Endothelial cell of umbilical vein (primary cell): ENCODE measurements at regions of chr17 and their contacts with region 1.

Region 1: DNA sequence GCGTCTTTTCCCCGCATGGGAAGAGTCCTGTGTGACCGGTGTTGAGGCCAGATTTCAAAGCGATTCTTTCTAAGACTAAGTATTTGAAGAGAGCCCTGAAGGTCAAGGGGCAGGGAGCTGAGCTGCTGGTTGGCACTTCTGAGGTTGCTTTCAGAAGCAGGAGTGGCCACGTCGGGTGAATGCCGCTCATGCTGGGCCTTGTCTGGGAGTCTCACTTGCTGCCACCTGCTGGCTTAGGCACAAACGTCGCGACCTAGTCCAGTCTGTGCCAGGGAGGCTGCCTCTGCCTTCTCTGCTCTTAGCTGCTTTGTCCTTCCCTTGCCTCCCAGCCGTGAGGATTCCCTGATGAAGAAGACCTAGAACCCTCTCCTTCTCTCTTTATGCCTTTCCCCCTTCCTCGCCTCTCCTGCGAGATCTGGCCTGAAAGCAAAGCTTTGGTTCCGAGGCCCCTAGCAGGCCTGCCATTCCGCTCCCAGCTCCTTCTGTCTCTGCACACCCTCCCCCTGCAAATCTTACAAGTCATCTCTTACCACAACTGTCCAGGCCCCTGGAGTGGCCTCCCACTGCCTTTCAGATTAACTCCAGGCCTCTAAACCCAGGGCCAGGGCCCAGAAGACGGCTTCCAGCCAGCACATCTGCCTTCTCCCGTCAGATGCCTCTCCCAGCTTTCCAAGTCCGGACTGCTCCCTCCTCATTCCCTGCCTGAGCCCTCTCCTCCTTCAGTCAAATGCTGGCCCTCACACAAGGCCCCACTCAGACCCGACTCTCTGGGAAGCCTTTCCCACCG is 11.4 kb downstream of the CTNS start:
- DNase-seq: peak; percentile 47
- H3K4me3 ChIP-seq: no peak overlapping the region
- H3K27ac ChIP-seq: no peak overlapping the region
- H3K4me1 ChIP-seq: no peaks in the 10 kb centered on the region
- H3K27me3 ChIP-seq: no peaks in the 10 kb centered on the region
- CTCF ChIP-seq: peak; percentile 45 to 70
- POLR2A ChIP-seq: no peak

Region 2: GRCh38 chr17:2828397-2829038 is 819.4 kb before region 1 on chr17:
- CTCF ChIA-PET with region 1: interaction called, 5 read pairs
- POLR2A ChIA-PET with region 1: no interaction called
- dilution Hi-C with region 1: no loop called
- intact Hi-C with region 1: loop called (anchors 5 kb)
- DNase-seq: peak; percentile 44
- H3K4me3 ChIP-seq: no peak overlapping the region
- H3K27ac ChIP-seq: no peak overlapping the region
- H3K4me1 ChIP-seq: no peaks in the 10 kb centered on the region
- H3K27me3 ChIP-seq: no peaks in the 10 kb centered on the region
- CTCF ChIP-seq: peak; percentile 73 to 93
- POLR2A ChIP-seq: no peak

Region 3: DNA sequence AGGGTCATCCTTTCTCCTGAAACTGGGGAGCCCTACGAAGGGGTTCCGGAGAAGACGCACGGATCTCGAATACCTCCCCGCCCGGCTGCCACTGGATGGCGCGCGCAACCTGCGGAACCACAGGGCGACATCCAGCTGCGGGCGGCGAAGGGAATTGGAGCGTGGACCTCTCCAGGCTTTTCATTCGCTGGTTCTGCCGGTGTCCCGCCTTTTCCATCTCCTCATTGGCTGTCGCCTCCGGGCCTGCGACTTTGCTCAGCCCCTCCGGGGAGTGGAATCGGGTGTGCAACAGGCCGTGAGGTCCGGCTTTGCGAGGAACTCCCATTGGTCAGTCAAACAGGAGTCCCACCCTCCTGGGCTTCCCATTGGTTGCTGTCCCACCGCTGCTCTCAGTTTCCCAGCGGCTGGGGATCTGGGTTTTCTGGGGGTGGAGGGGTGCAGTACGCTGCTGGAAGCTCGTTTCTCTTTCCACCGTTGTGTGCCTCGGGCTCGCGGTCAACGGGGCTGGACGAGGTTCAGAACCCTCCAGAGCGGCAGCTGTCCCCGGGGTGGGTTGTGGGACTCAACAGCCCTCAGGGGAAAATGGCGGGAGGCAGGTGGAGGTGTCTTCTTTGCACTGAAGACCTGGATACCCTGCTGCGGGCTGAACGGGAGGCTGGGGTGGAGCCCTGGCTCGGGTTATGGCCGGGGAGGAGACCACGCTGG is 599.0 kb before region 1 on chr17:
- CTCF ChIA-PET with region 1: interaction called, 76 read pairs
- POLR2A ChIA-PET with region 1: no interaction called
- dilution Hi-C with region 1: no loop called
- intact Hi-C with region 1: no loop called
- DNase-seq: peak; percentile 99
- H3K4me3 ChIP-seq: peak overlapping the region; percentile 44 to 75 (median 72)
- H3K27ac ChIP-seq: no peak overlapping the region
- H3K4me1 ChIP-seq: no peaks in the 10 kb centered on the region
- H3K27me3 ChIP-seq: no peaks in the 10 kb centered on the region
- CTCF ChIP-seq: peak; percentile 74 to 86
- POLR2A ChIP-seq: peak; percentile 70

Region 4: GRCh38 chr17:3535253-3535995 is 112.5 kb before region 1 on chr17:
- CTCF ChIA-PET with region 1: interaction called, 3 read pairs
- POLR2A ChIA-PET with region 1: no interaction called
- dilution Hi-C with region 1: no loop called
- intact Hi-C with region 1: loop called (anchors 1 kb)
- DNase-seq: peak; percentile 27
- H3K4me3 ChIP-seq: no peak overlapping the region
- H3K27ac ChIP-seq: no peak overlapping the region
- H3K4me1 ChIP-seq: no peaks in the 10 kb centered on the region
- H3K27me3 ChIP-seq: no peaks in the 10 kb centered on the region
- CTCF ChIP-seq: peak; percentile 56 to 62
- POLR2A ChIP-seq: no peak

Region 5: GRCh38 chr17:3602499-3602898 is 45.5 kb before region 1 on chr17:
- CTCF ChIA-PET with region 1: interaction called, 10 read pairs
- POLR2A ChIA-PET with region 1: no interaction called
- dilution Hi-C with region 1: no loop called
- intact Hi-C with region 1: no loop called
- DNase-seq: no peak
- H3K4me3 ChIP-seq: no peak overlapping the region
- H3K27ac ChIP-seq: no peak overlapping the region
- H3K4me1 ChIP-seq: peaks cover 9% of the 10 kb centered on the region
- H3K27me3 ChIP-seq: no peaks in the 10 kb centered on the region
- CTCF ChIP-seq: peak; percentile 24 to 33
- POLR2A ChIP-seq: no peak

Region 6: GRCh38 chr17:3636154-3636907 is 11.6 kb before region 1 on chr17 and contains the starts of genes CTNS and SHPK:
- CTCF ChIA-PET with region 1: interaction called, 12 read pairs
- POLR2A ChIA-PET with region 1: interaction called, 3 read pairs
- dilution Hi-C with region 1: no loop called
- intact Hi-C with region 1: no loop called
- DNase-seq: peak; percentile 95
- H3K4me3 ChIP-seq: peak within 1 kb of the TSS; percentile 65 to 83 (median 71)
- H3K27ac ChIP-seq: peak within 1 kb of the TSS; percentile 90
- H3K4me1 ChIP-seq: peaks cover 12% of the 10 kb centered on the region
- H3K27me3 ChIP-seq: no peaks in the 10 kb centered on the region
- CTCF ChIP-seq: no peak
- POLR2A ChIP-seq: peak; percentile 57
- total RNA-seq, gene CTNS: 20.8 and 25.9 TPM in 2 replicates
- total RNA-seq, gene SHPK: 15.9 and 17.8 TPM in 2 replicates

Region 7: DNA sequence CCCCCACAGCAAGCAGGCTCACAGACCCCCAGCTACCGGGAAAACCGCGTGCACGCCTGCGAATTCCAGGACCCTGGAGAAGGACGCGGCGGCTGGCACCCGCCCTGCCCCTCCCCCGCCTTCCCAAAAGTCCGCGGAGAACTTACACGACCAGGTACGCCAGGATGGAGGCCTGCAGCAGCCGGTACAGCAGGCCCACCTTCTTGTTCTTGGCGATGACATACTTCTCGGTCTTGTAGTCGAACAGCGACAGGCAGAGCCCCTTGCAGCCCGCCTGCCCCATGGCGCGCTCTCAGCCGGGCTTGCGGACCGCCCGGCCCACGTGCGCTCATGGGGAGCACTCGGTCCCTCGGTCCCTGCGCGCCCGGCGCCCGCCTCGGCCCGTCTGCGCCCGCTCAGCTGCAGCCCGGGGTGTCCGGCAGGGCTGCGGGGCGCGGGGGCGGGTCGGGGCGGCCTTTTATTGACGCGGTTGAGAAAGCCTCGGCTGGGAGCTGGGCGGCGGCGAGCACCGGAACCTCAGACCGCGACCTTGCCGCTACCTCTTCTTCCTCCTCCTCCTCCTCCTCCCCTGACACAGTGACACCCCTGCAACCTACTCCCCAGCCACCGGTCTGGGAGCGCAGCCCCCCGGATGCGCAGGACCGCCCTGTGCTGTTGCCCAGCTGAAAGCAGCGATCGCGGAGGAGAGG is 47.9 kb after region 1 on chr17 and contains the start of gene P2RX5:
- CTCF ChIA-PET with region 1: no interaction called
- POLR2A ChIA-PET with region 1: no interaction called
- dilution Hi-C with region 1: no loop called
- intact Hi-C with region 1: no loop called
- DNase-seq: peak; percentile 30
- H3K4me3 ChIP-seq: peak within 1 kb of the TSS in 2 of 3 experiments; percentile 22 to 40
- H3K27ac ChIP-seq: no peak within 1 kb of the TSS
- H3K4me1 ChIP-seq: peaks cover 5% of the 10 kb centered on the region
- H3K27me3 ChIP-seq: peaks cover 21 to 22% of the 10 kb centered on the region in 2 experiments
- CTCF ChIP-seq: no peak
- POLR2A ChIP-seq: no peak
- total RNA-seq, gene P2RX5: 0.22 and 0.37 TPM in 2 replicates